Heart right ventricle (tissue), 16 donors: ENCODE measurements at regions of chr11 and their contacts with region 1.

Region 1: DNA sequence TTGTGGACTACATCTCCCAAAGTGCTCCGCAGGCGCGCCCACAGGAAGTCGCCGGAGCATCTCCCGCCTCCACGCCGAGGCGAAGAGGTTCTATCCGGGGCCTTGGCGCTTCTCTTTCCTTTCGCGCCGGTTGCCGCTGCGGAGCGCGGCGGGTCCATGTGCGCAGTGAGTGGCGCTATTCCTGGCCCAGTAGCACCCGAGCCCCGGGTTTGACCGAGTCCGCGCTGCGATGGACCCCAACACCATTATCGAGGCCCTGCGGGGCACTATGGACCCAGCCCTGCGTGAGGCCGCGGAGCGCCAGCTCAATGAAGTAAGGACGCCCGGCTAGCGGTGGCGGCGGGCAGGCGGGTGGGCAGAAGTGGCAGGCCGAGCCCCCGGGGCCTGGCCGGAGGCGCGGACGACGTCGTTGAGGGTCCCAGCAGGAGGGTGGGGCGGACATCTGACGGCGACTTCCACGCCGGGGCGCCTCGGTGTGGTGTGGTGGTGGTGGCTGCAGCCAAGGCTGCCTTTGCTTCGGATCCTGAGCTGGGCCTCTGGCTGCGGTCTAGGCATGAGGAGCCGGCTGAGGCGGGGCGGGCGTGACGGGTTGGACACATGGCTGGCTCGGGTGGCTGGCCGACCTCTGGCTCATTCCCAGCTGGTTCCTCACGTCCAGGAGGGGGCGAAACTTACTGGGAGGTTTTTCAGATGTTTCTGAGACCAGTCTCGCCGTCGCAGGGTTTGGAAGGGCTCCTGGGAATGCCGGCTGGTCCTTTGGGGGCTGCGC is at the start of gene IPO7:
- DNase-seq: peak; percentile 89 to 90
- ATAC-seq: peak; percentile 95 to 98 (median 97)
- H3K4me3 ChIP-seq: peak within 1 kb of the TSS; percentile 66 to 93 (median 88)
- H3K27ac ChIP-seq: peak within 1 kb of the TSS; percentile 85 to 98 (median 96)
- H3K4me1 ChIP-seq: peaks cover 4 to 50% (median 34%) of the 10 kb centered on the region in 9 donors
- H3K27me3 ChIP-seq: no peaks in the 10 kb centered on the region
- CTCF ChIP-seq: peak in 8 of 9 donors; percentile 7 to 56 (median 20)
- total RNA-seq, gene IPO7: 129 to 169 (median 146) TPM

Region 2: GRCh38 chr11:9170450-9170849 is 214.3 kb before region 1 on chr11:
- intact Hi-C with region 1: loop called in 1 of 10 experiments (anchors 10 kb)
- DNase-seq: no peak
- ATAC-seq: peak in 1 of 8 donors; percentile 48
- H3K4me3 ChIP-seq: no peak overlapping the region
- H3K27ac ChIP-seq: no peak overlapping the region
- H3K4me1 ChIP-seq: peaks cover 0 to 20% (median 0%) of the 10 kb centered on the region in 9 donors
- H3K27me3 ChIP-seq: no peaks in the 10 kb centered on the region
- CTCF ChIP-seq: no peak

Region 3: GRCh38 chr11:9302448-9302847 is 82.3 kb before region 1 on chr11:
- intact Hi-C with region 1: no loop called
- DNase-seq: no peak
- ATAC-seq: no peak
- H3K4me3 ChIP-seq: no peak overlapping the region
- H3K27ac ChIP-seq: no peak overlapping the region
- H3K4me1 ChIP-seq: peaks cover 0 to 5% (median 0%) of the 10 kb centered on the region in 9 donors
- H3K27me3 ChIP-seq: no peaks in the 10 kb centered on the region
- CTCF ChIP-seq: no peak

Region 4: GRCh38 chr11:9363954-9364912 is 20.5 kb before region 1 on chr11:
- intact Hi-C with region 1: loop called in 2 of 10 experiments (anchors 1 to 2 kb)
- DNase-seq: peak; percentile 95
- ATAC-seq: peak; percentile 97 to 99 (median 98)
- H3K4me3 ChIP-seq: peak overlapping the region in 9 of 10 donors; percentile 20 to 58 (median 50)
- H3K27ac ChIP-seq: peak overlapping the region; percentile 93 to 100 (median 98)
- H3K4me1 ChIP-seq: peaks cover 0 to 36% (median 15%) of the 10 kb centered on the region in 9 donors
- H3K27me3 ChIP-seq: no peaks in the 10 kb centered on the region
- CTCF ChIP-seq: peak in 1 of 9 donors; percentile 36

Region 5: DNA sequence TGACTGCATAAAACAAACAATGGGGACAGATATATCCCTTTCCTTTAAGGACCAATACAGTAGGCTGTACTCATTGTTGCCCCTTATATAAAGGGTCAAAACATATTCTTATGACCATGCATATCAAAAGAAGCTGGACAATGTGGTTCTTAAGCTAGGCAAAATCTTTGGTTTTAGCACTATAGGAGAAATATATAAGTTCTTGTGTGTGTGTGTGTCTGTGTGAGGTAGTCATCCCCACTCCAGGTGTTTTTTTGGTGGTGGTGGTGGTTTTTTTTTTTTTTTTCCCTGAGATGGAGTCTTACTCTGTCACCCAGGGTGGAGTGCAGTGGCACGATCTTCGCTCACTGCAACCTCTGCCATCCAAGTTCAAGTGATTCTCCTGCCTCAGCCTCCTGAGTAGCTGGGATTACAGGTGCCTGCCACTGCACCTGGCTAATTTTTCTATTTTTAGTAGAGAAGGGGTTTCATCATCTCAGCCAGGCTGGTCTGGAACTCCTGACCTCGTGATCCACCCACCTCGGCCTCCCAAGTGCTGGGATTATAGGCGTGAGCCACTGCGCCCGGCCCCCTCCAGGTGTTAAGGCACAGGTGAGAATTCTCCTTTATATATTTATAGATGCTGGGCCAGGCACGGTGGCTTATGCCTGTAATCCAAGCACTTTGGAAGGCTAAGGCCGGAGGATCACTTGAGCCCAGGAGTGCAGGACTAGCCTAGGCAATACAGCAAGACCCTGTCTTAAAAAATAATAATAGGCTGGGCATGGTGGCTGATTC is 64.0 kb after region 1 on chr11:
- intact Hi-C with region 1: no loop called
- DNase-seq: no peak
- ATAC-seq: no peak
- H3K4me3 ChIP-seq: no peak overlapping the region
- H3K27ac ChIP-seq: no peak overlapping the region
- H3K4me1 ChIP-seq: no peaks in the 10 kb centered on the region
- H3K27me3 ChIP-seq: no peaks in the 10 kb centered on the region
- CTCF ChIP-seq: no peak

Region 6: GRCh38 chr11:9460322-9461067 is 75.8 kb after region 1 on chr11 and contains the start of gene ZNF143:
- intact Hi-C with region 1: loop called in 1 of 10 experiments (anchors 2 kb)
- DNase-seq: peak; percentile 100
- ATAC-seq: peak; percentile 94 to 98 (median 97)
- H3K4me3 ChIP-seq: peak within 1 kb of the TSS; percentile 71 to 99 (median 80)
- H3K27ac ChIP-seq: peak within 1 kb of the TSS; percentile 97 to 100 (median 98)
- H3K4me1 ChIP-seq: peaks cover 3 to 29% (median 21%) of the 10 kb centered on the region in 9 donors
- H3K27me3 ChIP-seq: no peaks in the 10 kb centered on the region
- CTCF ChIP-seq: no peak
- total RNA-seq, gene ZNF143: 11.7 to 28.8 (median 17.6) TPM